ENCODE measurements at regions of chr15 and their contacts with region 1.

Region 1: GRCh38 chr15:89358755-89359439 is 24.3 kb upstream of the POLG start:
- DNase-seq: peak; percentile 66 to 97 (median 82)

Region 2: DNA sequence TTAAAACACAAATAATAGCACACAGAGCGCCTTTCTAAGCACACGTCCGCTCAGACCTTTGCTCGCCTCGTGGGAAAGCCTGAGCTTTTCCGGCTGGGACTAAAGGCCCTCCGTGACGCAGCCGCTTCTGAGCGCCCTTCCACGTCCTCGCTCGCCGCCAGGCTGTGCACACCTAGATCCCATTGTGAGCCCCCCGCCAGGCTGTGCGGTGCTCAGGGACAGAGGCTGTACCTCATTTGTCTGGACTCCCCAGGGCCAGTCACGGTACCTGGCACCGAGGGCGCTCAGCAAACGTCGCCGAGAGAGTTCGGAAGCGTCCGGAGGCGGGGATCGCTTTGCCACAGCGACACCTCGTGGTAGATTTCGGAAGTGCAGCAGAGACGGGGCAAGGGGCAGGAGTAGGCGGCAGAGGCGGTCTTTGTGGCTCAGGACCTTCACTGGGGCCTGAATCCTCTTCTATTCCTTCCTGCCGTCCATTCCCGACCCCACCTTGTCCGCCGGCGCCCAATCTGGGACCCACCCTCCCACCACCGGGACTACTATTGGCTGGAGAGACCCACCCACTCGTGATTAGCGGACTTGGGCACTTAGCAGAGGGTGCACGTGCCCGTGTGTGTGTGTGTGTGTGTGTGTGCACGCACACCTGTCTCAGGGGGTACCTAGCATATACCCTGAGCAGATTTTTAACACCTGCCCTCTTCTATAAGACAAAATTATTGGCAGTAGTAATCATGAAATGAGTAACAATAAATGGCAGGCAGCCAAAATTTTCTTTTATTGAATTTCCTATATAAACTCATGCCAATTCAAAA is 71.8 kb after region 1 on chr15:
- intact Hi-C with region 1: loop called (anchors 1 kb)
- DNase-seq: peak; percentile 75 to 99 (median 93)

Region 3: DNA sequence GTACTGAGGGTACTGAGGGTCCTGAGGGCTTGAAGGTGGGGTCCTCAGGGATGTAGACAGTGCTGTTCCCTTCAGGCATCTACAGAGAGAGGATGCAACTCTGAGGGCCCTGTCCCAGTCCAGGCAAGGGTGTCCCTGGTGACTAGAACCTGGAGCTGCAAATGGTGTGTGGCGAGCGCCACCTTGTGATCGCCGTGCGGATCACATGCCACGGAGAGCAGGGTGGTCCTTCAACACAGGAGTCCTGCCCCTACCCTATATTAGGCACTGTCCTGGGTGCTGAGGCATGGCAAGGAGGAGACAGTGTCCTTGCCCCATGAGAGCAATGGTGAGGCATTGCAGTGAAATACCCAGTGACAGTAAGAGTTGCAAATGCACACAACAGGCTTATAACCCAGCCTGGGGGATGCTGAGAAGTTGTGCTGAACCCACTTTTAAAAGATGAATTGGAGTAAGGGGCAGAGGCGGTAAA is 113.9 kb after region 1 on chr15:
- intact Hi-C with region 1: loop called (anchors 1 kb)
- DNase-seq: peak in 9 of 10 donors; percentile 59 to 95 (median 69)

Region 4: GRCh38 chr15:89556413-89557262 is 197.7 kb after region 1 on chr15:
- intact Hi-C with region 1: loop called (anchors 2 kb)
- DNase-seq: peak in 4 of 10 donors; percentile 37 to 55 (median 40)

Measured in posterior cingulate gyrus (tissue), 11 donors.